ENCODE measurements at regions of chr16 and their contacts with region 1.

Region 1: GRCh38 chr16:84084570-84085270 is 32.0 kb downstream of the MBTPS1 start:
- DNase-seq: peak; percentile 74
- H3K4me3 ChIP-seq: no peak overlapping the region
- H3K27ac ChIP-seq: no peak overlapping the region
- H3K4me1 ChIP-seq: no peaks in the 10 kb centered on the region
- H3K27me3 ChIP-seq: no peaks in the 10 kb centered on the region
- CTCF ChIP-seq: peak; percentile 73

Region 2: GRCh38 chr16:84186685-84187437 is 102.1 kb after region 1 on chr16 and contains the start of gene TAF1C:
- intact Hi-C with region 1: loop called (anchors 2 kb)
- DNase-seq: peak; percentile 92
- H3K4me3 ChIP-seq: peak within 1 kb of the TSS; percentile 88
- H3K27ac ChIP-seq: peak within 1 kb of the TSS; percentile 49
- H3K4me1 ChIP-seq: no peaks in the 10 kb centered on the region
- H3K27me3 ChIP-seq: no peaks in the 10 kb centered on the region
- CTCF ChIP-seq: peak; percentile 94
- total RNA-seq, gene TAF1C: 17.2 to 45.6 TPM